ENCODE measurements at regions of chr16 and their contacts with region 1.

Region 1: DNA sequence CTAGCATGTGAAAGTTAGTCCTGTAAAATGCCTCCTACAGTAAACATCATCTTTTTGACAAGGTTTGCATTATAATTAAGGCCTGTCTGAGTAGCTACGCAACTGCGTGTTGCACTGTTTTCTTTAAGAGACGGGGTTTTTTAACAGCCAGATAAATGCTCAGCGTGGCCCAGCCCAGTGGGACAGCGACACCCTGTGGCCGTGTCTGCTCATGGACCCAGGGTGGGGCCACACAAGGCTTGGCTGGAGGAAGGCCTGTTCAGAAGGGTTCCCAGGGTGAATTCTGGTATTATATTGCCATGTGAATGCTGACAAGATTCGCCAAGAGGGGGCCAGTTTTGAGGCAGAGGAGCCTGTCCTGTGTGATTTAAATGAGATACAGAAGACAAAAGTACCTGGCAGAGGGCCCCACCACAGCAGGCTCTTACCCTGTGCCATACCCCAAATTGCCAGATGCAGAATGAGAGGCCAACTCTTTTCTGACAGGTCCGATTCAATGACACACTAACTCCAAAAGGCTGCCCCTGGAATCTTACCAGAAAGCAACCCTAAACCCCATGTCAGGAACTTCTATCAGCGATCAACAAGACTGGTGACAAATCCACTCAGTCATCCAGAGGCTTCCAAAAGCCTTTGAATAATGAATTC is 65.9 kb upstream of the IRX6 start:
- DNase-seq: peak; percentile 46
- H3K4me3 ChIP-seq: no peak overlapping the region
- H3K27ac ChIP-seq: no peak overlapping the region
- H3K4me1 ChIP-seq: no peaks in the 10 kb centered on the region
- H3K27me3 ChIP-seq: no peaks in the 10 kb centered on the region
- CTCF ChIP-seq: peak; percentile 91 to 95

Region 2: GRCh38 chr16:53945996-53946395 is 1312.1 kb before region 1 on chr16:
- CTCF ChIA-PET with region 1: no interaction called
- dilution Hi-C with region 1: no loop called
- in situ Hi-C with region 1: no loop called
- intact Hi-C with region 1: loop called (anchors 5 kb)
- DNase-seq: peak; percentile 43
- H3K4me3 ChIP-seq: no peak overlapping the region
- H3K27ac ChIP-seq: no peak overlapping the region
- H3K4me1 ChIP-seq: peaks cover 3% of the 10 kb centered on the region
- H3K27me3 ChIP-seq: no peaks in the 10 kb centered on the region
- CTCF ChIP-seq: peak; percentile 83 to 94

Region 3: GRCh38 chr16:55035029-55035428 is 223.1 kb before region 1 on chr16:
- CTCF ChIA-PET with region 1: no interaction called
- dilution Hi-C with region 1: no loop called
- in situ Hi-C with region 1: no loop called
- intact Hi-C with region 1: loop called (anchors 1 kb)
- DNase-seq: peak; percentile 25
- H3K4me3 ChIP-seq: no peak overlapping the region
- H3K27ac ChIP-seq: no peak overlapping the region
- H3K4me1 ChIP-seq: peaks cover 12% of the 10 kb centered on the region
- H3K27me3 ChIP-seq: peaks cover 4% of the 10 kb centered on the region
- CTCF ChIP-seq: peak; percentile 47 to 63

Region 4: GRCh38 chr16:55222473-55222872 is 35.6 kb before region 1 on chr16:
- CTCF ChIA-PET with region 1: no interaction called
- dilution Hi-C with region 1: loop called (anchors 5 kb)
- in situ Hi-C with region 1: no loop called
- intact Hi-C with region 1: no loop called
- DNase-seq: no peak
- H3K4me3 ChIP-seq: no peak overlapping the region
- H3K27ac ChIP-seq: no peak overlapping the region
- H3K4me1 ChIP-seq: no peaks in the 10 kb centered on the region
- H3K27me3 ChIP-seq: peaks cover 1% of the 10 kb centered on the region
- CTCF ChIP-seq: no peak

Region 5: GRCh38 chr16:55280587-55280986 is 22.5 kb after region 1 on chr16:
- CTCF ChIA-PET with region 1: no interaction called
- dilution Hi-C with region 1: no loop called
- in situ Hi-C with region 1: no loop called
- intact Hi-C with region 1: no loop called
- DNase-seq: peak; percentile 19
- H3K4me3 ChIP-seq: no peak overlapping the region
- H3K27ac ChIP-seq: no peak overlapping the region
- H3K4me1 ChIP-seq: peaks cover 3% of the 10 kb centered on the region
- H3K27me3 ChIP-seq: peaks cover 11% of the 10 kb centered on the region
- CTCF ChIP-seq: no peak

Region 6: DNA sequence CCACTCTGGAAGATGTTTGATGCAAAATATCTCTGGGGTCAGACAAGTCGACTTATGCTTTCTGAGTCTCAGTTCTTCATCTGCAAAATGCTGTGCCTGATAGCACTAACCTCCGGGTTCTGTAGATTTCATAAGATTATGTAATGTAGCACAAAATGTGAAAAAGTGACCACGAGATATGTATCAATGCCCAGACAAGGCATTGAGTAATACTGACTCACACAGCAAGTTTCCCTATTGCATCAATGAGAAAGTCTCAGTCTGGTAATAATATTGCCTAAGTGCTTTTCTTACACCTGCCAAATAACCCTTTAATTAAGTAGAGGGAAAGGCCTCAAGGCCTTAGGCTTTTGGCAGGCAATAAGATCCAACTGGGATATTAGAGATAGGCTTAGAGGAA is 179.5 kb after region 1 on chr16:
- CTCF ChIA-PET with region 1: no interaction called
- dilution Hi-C with region 1: no loop called
- in situ Hi-C with region 1: no loop called
- intact Hi-C with region 1: no loop called
- DNase-seq: peak; percentile 94
- H3K4me3 ChIP-seq: no peak overlapping the region
- H3K27ac ChIP-seq: peak overlapping the region; percentile 64
- H3K4me1 ChIP-seq: peaks cover 24% of the 10 kb centered on the region
- H3K27me3 ChIP-seq: no peaks in the 10 kb centered on the region
- CTCF ChIP-seq: no peak

Measured in mammary epithelial cell (primary cell).